ENCODE measurements at regions of chr11 and their contacts with region 1.

Region 1: GRCh38 chr11:78188286-78189173 is at the starts of genes KCTD21 and USP35:
- DNase-seq: peak; percentile 99
- ATAC-seq: peak; percentile 97
- total RNA-seq, gene KCTD21: 6.4 to 6.8 TPM
- total RNA-seq, gene USP35: 6.5 to 10.6 TPM

Region 2: GRCh38 chr11:77771135-77771534 is 417.4 kb before region 1 on chr11:
- intact Hi-C with region 1: no loop called
- DNase-seq: no peak
- ATAC-seq: no peak

Region 3: DNA sequence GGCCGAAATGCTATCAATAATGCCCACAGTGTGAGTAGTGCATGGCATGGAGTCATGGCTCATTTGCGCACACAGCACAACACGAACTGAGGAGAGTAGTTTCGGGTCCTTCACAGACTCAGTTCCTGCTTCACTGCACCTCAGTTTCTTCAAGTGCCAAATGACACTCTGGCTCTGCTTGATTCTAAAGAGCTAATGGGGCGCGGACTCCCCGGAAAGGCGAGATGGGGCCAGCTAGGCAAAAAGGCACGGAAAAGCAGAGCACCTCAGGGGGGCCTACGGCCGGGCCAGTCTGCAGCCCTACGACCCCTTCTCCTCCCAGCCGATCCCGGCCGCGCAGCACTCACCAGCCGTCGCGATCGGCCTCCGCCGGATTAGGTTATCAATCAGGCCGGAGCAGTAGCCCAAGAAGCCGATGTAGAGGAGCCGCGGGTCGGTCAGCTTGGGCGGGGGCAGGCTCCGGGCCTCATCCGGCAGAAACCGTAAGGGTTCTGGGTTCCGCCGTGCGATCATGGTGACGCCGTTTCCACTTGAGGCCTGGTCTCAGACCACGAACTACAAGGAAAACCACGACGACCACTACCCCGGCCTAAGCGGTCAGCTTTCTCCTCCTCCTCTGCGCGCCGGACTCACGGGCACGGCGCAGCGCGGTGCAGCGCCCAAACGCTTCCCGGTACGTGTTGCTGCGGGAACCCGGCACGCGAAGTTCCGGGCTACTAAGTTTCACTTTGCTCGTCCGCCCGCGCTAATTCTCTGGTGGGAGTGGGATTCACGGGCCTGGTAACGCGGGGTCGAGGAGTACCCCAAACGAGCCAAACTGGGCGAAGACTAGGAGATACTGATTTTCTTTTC is 109.1 kb before region 1 on chr11 and contains the start of gene NDUFC2:
- intact Hi-C with region 1: loop called in 1 of 2 experiments (anchors 10 kb)
- DNase-seq: peak; percentile 85
- ATAC-seq: peak; percentile 96 to 97
- total RNA-seq, gene NDUFC2: 276 to 291 TPM